CD4-positive, alpha-beta T cell (primary cell): ENCODE measurements at regions of chr6 and their contacts with region 1.

Region 1: DNA sequence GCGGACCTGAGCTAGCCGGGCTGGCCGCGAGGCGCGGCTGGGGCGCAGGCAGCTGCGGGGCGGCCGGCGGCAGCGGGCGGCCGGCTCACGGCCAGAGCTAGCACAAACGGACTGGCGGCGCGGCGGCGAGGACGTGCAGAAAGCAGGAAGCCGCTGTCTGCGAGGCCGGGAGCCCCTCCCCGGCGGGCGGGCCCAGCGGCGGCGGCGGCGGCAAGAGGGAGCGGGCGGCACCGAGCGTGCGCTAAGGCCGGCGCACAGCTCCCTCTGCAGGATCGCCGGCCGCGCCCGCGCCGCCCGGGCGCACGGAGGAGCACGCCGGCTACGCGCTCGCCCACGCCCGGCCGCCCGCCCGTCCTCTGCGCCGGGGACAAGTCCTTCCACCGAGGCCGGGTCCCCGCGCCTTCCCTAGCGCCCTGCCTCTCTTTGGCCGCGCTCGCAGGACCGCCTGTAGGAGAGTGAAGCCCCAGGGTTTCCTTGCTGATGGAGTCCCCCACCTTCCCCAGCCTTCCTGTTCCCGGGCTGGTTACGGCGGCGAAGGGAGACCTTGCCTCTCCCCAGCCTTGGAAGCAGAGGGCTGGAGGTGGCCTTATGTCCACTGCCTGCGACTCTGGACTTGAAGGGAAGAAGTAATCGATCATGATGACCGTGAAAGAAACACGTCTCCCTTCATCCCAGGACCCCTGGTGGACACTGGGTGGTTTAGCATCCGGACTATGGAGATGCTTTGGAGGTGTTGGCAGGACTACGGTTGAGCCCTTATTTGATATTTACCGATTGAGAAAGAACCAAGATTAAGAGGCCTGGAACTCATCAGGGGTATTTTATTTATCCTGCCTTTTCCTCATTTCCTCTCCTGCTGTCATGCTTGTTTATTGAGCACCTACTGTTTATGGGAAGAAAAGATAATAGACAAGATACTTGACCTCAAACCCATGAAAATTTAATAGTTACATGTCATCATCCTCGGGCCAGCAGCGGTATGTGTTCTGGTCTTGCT is at the start of gene PREP:
- DNase-seq: peak; percentile 60 to 92 (median 80)
- ATAC-seq: peak; percentile 95
- H3K4me3 ChIP-seq: peak within 1 kb of the TSS; percentile 94
- H3K4me3 Mint-ChIP-seq: peak within 1 kb of the TSS; percentile 91
- H3K27ac ChIP-seq: no peak within 1 kb of the TSS
- H3K27ac Mint-ChIP-seq: peak within 1 kb of the TSS; percentile 66
- H3K4me1 ChIP-seq: peaks cover 42% of the 10 kb centered on the region
- H3K4me1 Mint-ChIP-seq: peaks cover 52% of the 10 kb centered on the region
- H3K27me3 ChIP-seq: no peaks in the 10 kb centered on the region
- H3K27me3 Mint-ChIP-seq: peaks cover 11% of the 10 kb centered on the region
- CTCF ChIP-seq: peak; percentile 90
- total RNA-seq, gene PREP: 14.9 to 15.6 TPM

Region 2: GRCh38 chr6:105087571-105088211 is 315.5 kb before region 1 on chr6:
- CTCF ChIA-PET with region 1: interaction called, 4 read pairs
- POLR2A ChIA-PET with region 1: interaction called, 4 read pairs
- intact Hi-C with region 1: loop called (anchors 1 to 5 kb)
- DNase-seq: peak in 6 of 14 experiments; percentile 2 to 69 (median 41)
- ATAC-seq: no peak
- H3K4me3 ChIP-seq: no peak overlapping the region
- H3K4me3 Mint-ChIP-seq: no peak overlapping the region
- H3K27ac ChIP-seq: no peak overlapping the region
- H3K27ac Mint-ChIP-seq: no peak overlapping the region
- H3K4me1 ChIP-seq: no peaks in the 10 kb centered on the region
- H3K4me1 Mint-ChIP-seq: no peaks in the 10 kb centered on the region
- H3K27me3 ChIP-seq: peaks cover 0 to 5% of the 10 kb centered on the region in 2 experiments
- H3K27me3 Mint-ChIP-seq: peaks cover 6% of the 10 kb centered on the region
- CTCF ChIP-seq: peak; percentile 78

Region 3: GRCh38 chr6:105317607-105318533 is 85.4 kb before region 1 on chr6:
- CTCF ChIA-PET with region 1: no interaction called
- POLR2A ChIA-PET with region 1: no interaction called
- intact Hi-C with region 1: loop called in 1 of 2 experiments (anchors 5 kb)
- DNase-seq: peak in 2 of 14 experiments; percentile 5 to 12
- ATAC-seq: no peak
- H3K4me3 ChIP-seq: no peak overlapping the region
- H3K4me3 Mint-ChIP-seq: no peak overlapping the region
- H3K27ac ChIP-seq: no peak overlapping the region
- H3K27ac Mint-ChIP-seq: no peak overlapping the region
- H3K4me1 ChIP-seq: no peaks in the 10 kb centered on the region
- H3K4me1 Mint-ChIP-seq: no peaks in the 10 kb centered on the region
- H3K27me3 ChIP-seq: no peaks in the 10 kb centered on the region
- H3K27me3 Mint-ChIP-seq: no peaks in the 10 kb centered on the region
- CTCF ChIP-seq: no peak

Region 4: DNA sequence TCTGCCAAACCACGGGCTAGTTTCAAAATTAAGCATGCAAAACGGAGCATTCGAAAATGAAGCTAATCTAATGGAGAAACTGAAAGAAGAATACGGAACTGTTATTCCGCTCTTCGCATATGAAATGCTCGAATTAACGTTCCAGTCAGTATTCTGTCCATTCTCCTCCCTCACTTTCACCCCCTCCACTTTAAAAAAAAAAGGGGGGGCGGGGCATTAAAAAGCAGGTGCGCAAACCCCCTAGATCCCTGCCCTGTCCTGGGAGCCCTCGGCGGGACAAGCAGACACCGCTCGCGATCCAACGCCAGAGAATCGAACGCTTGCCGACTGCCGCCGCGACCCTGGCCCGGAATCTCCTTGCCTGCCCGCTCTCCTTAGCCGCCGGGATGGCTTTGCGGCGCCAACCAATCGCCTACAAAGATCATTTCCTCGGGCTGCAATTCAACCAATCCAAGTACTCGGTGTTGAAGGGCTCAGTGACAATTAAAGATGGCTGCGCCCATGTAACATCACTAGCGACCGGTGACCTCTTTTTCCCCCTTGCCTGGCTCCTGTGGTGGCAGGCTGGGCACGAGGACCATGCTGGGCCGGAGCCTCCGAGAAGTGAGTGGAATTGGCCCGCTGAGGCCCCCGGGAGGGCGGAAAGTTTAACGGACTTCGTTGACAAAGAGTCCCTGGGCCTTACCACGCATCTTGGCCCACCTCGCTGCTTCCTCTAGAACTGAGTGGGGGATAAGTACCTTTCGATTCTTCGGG is 1226.0 kb after region 1 on chr6 and contains the starts of genes QRSL1 and RTN4IP1:
- CTCF ChIA-PET with region 1: no interaction called
- POLR2A ChIA-PET with region 1: no interaction called
- intact Hi-C with region 1: loop called in 1 of 2 experiments (anchors 10 kb)
- DNase-seq: peak; percentile 67 to 95 (median 78)
- ATAC-seq: peak; percentile 94
- H3K4me3 ChIP-seq: peak within 1 kb of the TSS; percentile 79
- H3K4me3 Mint-ChIP-seq: peak within 1 kb of the TSS; percentile 97
- H3K27ac ChIP-seq: peak within 1 kb of the TSS; percentile 64 to 83
- H3K27ac Mint-ChIP-seq: peak within 1 kb of the TSS; percentile 96
- H3K4me1 ChIP-seq: peaks cover 15% of the 10 kb centered on the region
- H3K4me1 Mint-ChIP-seq: peaks cover 42% of the 10 kb centered on the region
- H3K27me3 ChIP-seq: no peaks in the 10 kb centered on the region
- H3K27me3 Mint-ChIP-seq: no peaks in the 10 kb centered on the region
- CTCF ChIP-seq: no peak
- total RNA-seq, gene QRSL1: 7.3 to 9.3 TPM
- total RNA-seq, gene RTN4IP1: 2.4 to 2.5 TPM

Region 5: GRCh38 chr6:107026965-107027364 is 1623.7 kb after region 1 on chr6:
- CTCF ChIA-PET with region 1: no interaction called
- POLR2A ChIA-PET with region 1: no interaction called
- intact Hi-C with region 1: loop called in 1 of 2 experiments (anchors 5 kb)
- DNase-seq: no peak
- ATAC-seq: no peak
- H3K4me3 ChIP-seq: no peak overlapping the region
- H3K4me3 Mint-ChIP-seq: peak overlapping the region; percentile 76
- H3K27ac ChIP-seq: no peak overlapping the region
- H3K27ac Mint-ChIP-seq: no peak overlapping the region
- H3K4me1 ChIP-seq: peaks cover 22% of the 10 kb centered on the region
- H3K4me1 Mint-ChIP-seq: peaks cover 27% of the 10 kb centered on the region
- H3K27me3 ChIP-seq: no peaks in the 10 kb centered on the region
- H3K27me3 Mint-ChIP-seq: no peaks in the 10 kb centered on the region
- CTCF ChIP-seq: no peak